SK-N-SH (cell line): ENCODE measurements at regions of chrX and their contacts with region 1.

Region 1: DNA sequence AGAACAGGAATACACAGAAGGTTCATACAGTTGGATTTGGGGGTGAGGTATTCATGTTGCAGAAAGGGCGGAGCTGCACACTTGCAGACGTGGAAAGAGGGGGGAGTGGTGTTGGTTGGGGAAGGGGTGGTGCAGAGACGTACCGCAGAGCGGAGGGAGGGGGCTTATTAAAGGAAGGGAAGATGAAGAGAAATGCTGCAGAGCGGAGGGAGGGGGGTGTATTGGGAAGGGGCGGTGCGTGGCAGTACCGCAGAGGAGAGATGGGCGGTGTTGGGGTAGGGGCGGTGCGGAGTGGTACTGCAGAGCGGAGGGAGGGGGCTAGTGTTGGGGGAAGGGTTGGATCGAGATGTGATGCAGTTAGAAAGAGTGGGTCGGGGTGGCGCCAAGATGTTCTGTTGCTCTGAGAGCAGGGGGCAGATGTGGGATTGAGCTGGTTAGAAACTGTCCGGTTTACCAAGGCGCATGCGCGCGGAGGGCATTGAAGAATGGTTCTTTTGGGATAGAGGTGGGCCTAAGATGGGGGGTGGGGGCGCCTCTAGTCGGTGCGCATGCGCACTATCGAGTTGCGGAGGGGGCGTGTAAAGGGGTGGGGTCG is 900 bp downstream of the TRO start:
- DNase-seq: peak; percentile 83
- H3K4me3 ChIP-seq: peak overlapping the region; percentile 71 to 76
- H3K27ac ChIP-seq: peak overlapping the region in 1 of 2 experiments; percentile 86; a peak in 2 of 4 replicates
- H3K4me1 ChIP-seq: peaks cover 0 to 6% of the 10 kb centered on the region in 2 experiments; a peak in 1 of 4 replicates
- H3K27me3 ChIP-seq: no peaks in the 10 kb centered on the region
- CTCF ChIP-seq: no peak
- EP300 ChIP-seq: no peak
- RAD21 ChIP-seq: no peak

Region 2: GRCh38 chrX:54999717-55000598 is 78.4 kb after region 1 on chrX and contains the start of gene APEX2:
- CTCF ChIA-PET with region 1: no interaction called
- POLR2A ChIA-PET with region 1: interaction called, 12 read pairs
- DNase-seq: peak; percentile 78
- H3K4me3 ChIP-seq: peak within 1 kb of the TSS; percentile 70
- H3K27ac ChIP-seq: peak within 1 kb of the TSS; percentile 91 to 93
- H3K4me1 ChIP-seq: peaks cover 0 to 4% of the 10 kb centered on the region in 2 experiments; a peak in 1 of 4 replicates
- H3K27me3 ChIP-seq: no peaks in the 10 kb centered on the region
- CTCF ChIP-seq: no peak
- EP300 ChIP-seq: no peak
- RAD21 ChIP-seq: no peak
- polyA plus RNA-seq, gene APEX2: 23.5 and 26.9 TPM in 2 replicates